Endothelial cell of umbilical vein (primary cell): ENCODE measurements at regions of chr19 and their contacts with region 1.

Region 1: GRCh38 chr19:49451430-49452181 is at the start of gene PIH1D1:
- DNase-seq: peak; percentile 99
- H3K4me3 ChIP-seq: peak within 1 kb of the TSS; percentile 43 to 84 (median 80)
- H3K27ac ChIP-seq: peak within 1 kb of the TSS; percentile 83
- H3K4me1 ChIP-seq: peaks cover 11% of the 10 kb centered on the region
- H3K27me3 ChIP-seq: no peaks in the 10 kb centered on the region
- CTCF ChIP-seq: no peak
- POLR2A ChIP-seq: peak; percentile 93
- total RNA-seq, gene PIH1D1: 84.1 and 86.9 TPM in 2 replicates

Region 2: DNA sequence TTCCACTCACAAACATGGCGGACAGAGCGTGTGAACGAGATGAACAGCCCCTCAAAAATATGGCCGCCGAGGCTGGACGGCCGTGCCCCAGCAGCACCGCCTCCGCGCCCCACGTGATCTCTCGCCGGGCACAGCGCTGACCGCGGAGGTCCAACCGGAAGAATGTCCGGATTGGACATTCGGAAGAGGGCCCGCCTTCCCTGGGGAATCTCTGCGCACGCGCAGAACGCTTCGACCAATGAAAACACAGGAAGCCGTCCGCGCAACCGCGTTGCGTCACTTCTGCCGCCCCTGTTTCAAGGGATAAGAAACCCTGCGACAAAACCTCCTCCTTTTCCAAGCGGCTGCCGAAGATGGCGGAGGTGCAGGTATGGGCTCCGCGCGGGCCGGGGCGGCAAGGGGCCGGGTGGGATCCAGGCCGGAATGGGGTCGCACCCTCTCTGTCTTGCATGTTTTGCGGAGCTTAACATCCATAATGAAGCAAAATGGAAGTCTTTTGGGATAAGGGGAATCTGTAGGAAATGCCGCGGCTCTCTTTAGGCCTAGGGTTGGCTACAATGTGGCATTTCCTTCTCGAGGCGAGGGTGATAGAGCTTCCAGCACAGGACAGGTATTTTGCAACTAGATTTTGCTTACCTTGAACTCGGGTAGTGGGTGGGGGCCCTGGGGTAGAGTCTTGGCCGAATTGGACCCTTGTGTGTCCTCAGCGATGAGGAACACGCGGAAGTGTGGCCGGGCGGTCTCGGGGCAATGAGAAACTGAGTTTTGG is 35.9 kb after region 1 on chr19 and contains the start of gene RPL13A:
- CTCF ChIA-PET with region 1: no interaction called
- POLR2A ChIA-PET with region 1: no interaction called
- dilution Hi-C with region 1: no loop called
- intact Hi-C with region 1: loop called (anchors 1 kb)
- DNase-seq: peak; percentile 100
- H3K4me3 ChIP-seq: peak within 1 kb of the TSS; percentile 60 to 94 (median 90)
- H3K27ac ChIP-seq: peak within 1 kb of the TSS; percentile 89
- H3K4me1 ChIP-seq: peaks cover 12% of the 10 kb centered on the region
- H3K27me3 ChIP-seq: no peaks in the 10 kb centered on the region
- CTCF ChIP-seq: no peak
- POLR2A ChIP-seq: peak; percentile 99
- total RNA-seq, gene RPL13A: 2,291 and 2,318 TPM in 2 replicates